Activated CD4-positive, alpha-beta memory T cell treated with anti-CD3 and anti-CD28 coated beads for 36 hours (primary cell): ENCODE measurements at regions of chr16 and their contacts with region 1.

Region 1: GRCh38 chr16:30650369-30651123 is at the start of gene PRR14:
- DNase-seq: peak; percentile 100
- H3K4me3 Mint-ChIP-seq: peak within 1 kb of the TSS; percentile 92
- H3K27ac Mint-ChIP-seq: peak within 1 kb of the TSS; percentile 96
- H3K4me1 Mint-ChIP-seq: peaks cover 21% of the 10 kb centered on the region
- H3K27me3 Mint-ChIP-seq: no peaks in the 10 kb centered on the region
- total RNA-seq, gene PRR14: 73.2 to 83.2 TPM

Region 2: GRCh38 chr16:30526823-30527635 is 123.5 kb before region 1 on chr16:
- CTCF ChIA-PET with region 1: no interaction called
- POLR2A ChIA-PET with region 1: no interaction called
- intact Hi-C with region 1: loop called (anchors 2 kb)
- DNase-seq: peak; percentile 98
- H3K4me3 Mint-ChIP-seq: peak overlapping the region; percentile 73
- H3K27ac Mint-ChIP-seq: peak overlapping the region; percentile 86
- H3K4me1 Mint-ChIP-seq: peaks cover 38% of the 10 kb centered on the region
- H3K27me3 Mint-ChIP-seq: no peaks in the 10 kb centered on the region

Region 3: DNA sequence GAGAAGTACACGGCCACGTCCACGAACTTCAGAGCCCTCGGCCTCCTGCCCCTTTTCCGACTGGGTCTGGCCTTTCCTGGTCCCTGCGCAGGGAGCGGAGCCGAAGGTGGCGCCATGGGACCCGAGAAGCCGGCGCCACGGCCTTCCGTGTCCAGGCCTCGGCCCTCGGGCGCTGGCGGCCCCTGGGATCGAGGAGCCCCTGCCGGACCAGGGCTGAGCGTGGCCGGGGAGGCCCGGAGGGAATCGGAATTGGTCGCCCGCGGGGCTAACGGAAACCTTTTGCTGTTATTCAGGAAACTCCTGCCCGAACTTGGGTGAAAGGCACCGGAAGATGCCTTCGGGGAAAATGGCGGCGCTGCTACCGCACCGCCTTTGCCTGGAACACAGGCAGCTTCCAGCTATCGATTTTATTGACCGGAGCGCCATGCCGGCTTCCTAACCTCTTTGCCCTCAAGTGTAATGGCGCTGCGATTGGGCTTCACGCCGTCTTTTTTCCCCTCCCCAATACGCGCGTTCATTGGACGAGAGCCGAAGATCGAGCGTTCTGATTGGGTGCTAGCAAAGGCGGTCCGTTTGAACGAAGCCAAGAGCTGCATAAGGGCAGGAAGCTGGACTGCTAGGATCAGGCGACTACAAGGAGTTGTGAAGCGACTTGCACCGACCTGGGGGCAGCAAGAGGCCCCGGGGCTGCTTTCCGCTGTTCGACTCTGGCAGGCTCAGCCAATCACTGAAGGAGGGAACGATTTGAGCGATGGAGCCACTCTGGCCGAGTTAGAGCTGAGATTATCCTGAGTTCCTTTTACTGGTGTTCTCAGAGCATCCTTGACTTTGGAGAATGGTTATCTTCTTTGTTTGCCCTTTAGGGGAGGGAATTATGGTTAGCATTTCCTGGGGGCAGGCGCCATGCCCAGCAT is 40.4 kb before region 1 on chr16 and contains the start of gene ZNF689:
- CTCF ChIA-PET with region 1: interaction called, 6 read pairs
- POLR2A ChIA-PET with region 1: interaction called, 5 read pairs
- intact Hi-C with region 1: loop called (anchors 1 kb)
- DNase-seq: peak; percentile 98
- H3K4me3 Mint-ChIP-seq: peak within 1 kb of the TSS; percentile 89
- H3K27ac Mint-ChIP-seq: peak within 1 kb of the TSS; percentile 94
- H3K4me1 Mint-ChIP-seq: peaks cover 15% of the 10 kb centered on the region
- H3K27me3 Mint-ChIP-seq: no peaks in the 10 kb centered on the region
- total RNA-seq, gene ZNF689: 8.7 to 9.9 TPM

Region 4: DNA sequence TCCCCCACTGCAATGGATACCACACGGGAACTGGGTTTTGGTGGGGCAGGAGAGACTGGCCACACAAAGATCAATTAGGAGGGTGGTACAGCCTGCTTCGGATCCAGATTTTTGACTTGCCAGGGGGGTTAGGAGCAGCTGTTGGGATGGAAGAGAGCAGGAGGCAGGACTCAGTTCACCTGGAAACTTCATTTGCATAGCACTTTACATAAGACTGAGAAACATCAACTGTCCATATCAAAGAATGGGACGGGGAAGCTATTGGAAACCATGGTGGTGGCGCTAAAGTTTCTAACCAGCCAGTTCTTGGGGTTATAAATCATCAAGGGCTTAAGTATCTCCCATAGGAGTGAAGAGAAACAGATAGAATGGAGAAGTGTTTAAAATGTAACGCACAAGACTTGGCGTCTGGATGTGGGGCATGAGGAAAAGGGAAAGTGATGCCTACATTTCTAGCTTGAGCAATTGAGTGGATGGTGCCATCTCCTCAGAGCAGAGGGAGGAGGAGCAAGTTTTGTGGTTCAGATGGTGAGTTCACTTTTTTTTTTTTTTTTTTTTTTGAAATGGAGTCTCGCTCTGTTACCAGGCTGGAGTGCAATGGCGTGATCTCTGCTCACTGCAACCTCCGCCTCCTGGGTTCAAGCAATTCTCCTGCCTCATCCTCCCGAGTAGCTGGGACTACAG is 42.0 kb after region 1 on chr16:
- CTCF ChIA-PET with region 1: interaction called, 23 read pairs
- POLR2A ChIA-PET with region 1: interaction called, 5 read pairs
- intact Hi-C with region 1: no loop called
- DNase-seq: no peak
- H3K4me3 Mint-ChIP-seq: no peak overlapping the region
- H3K27ac Mint-ChIP-seq: peak overlapping the region; percentile 38
- H3K4me1 Mint-ChIP-seq: peaks cover 15% of the 10 kb centered on the region
- H3K27me3 Mint-ChIP-seq: no peaks in the 10 kb centered on the region

Region 5: DNA sequence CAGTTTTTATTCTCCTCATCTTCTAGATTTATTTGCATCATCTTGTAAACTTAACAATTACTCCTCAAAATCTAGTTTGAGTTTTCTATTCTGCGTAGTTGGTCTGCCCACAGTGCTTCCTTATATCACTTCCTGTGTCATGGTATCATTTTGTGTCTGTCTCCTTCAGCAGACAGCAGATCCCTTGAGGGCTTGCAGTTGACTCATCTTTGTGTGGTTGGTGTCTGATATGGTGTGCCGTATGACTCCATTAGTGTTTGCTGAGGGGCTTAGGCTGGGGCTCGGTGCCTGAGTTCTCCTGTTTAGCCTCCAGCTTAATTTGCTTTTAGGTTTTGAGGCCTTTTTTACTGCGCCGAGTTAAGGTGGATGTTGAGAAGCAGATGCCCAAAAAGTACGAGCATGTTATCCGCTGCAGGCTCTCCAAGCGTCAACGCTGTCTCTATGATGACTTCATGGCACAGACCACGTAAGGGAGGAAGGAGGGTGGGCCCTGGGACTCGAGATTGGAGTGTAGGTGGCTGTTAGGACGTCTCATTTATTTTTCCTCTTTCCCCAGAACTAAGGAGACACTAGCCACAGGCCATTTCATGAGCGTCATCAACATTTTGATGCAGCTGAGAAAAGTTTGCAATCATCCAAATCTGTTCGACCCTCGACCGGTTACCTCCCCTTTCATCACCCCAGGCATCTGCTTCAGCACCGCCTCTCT is 65.3 kb after region 1 on chr16:
- CTCF ChIA-PET with region 1: no interaction called
- POLR2A ChIA-PET with region 1: no interaction called
- intact Hi-C with region 1: no loop called
- DNase-seq: peak; percentile 63
- H3K4me3 Mint-ChIP-seq: peak overlapping the region; percentile 42
- H3K27ac Mint-ChIP-seq: peak overlapping the region; percentile 97
- H3K4me1 Mint-ChIP-seq: peaks cover 37% of the 10 kb centered on the region
- H3K27me3 Mint-ChIP-seq: no peaks in the 10 kb centered on the region

Region 6: GRCh38 chr16:30813821-30814189 is 163.3 kb after region 1 on chr16:
- CTCF ChIA-PET with region 1: no interaction called
- POLR2A ChIA-PET with region 1: no interaction called
- intact Hi-C with region 1: loop called (anchors 1 kb)
- DNase-seq: no peak
- H3K4me3 Mint-ChIP-seq: peak overlapping the region; percentile 84
- H3K27ac Mint-ChIP-seq: peak overlapping the region; percentile 72
- H3K4me1 Mint-ChIP-seq: peaks cover 11% of the 10 kb centered on the region
- H3K27me3 Mint-ChIP-seq: no peaks in the 10 kb centered on the region